Mammary epithelial cell (primary cell): ENCODE measurements at regions of chr17 and their contacts with region 1.

Region 1: GRCh38 chr17:79892459-79892858 is 53.2 kb upstream of the CBX4 start:
- DNase-seq: peak; percentile 20
- H3K4me3 ChIP-seq: no peak overlapping the region
- H3K27ac ChIP-seq: no peak overlapping the region
- H3K4me1 ChIP-seq: no peaks in the 10 kb centered on the region
- H3K27me3 ChIP-seq: no peaks in the 10 kb centered on the region
- CTCF ChIP-seq: no peak

Region 2: DNA sequence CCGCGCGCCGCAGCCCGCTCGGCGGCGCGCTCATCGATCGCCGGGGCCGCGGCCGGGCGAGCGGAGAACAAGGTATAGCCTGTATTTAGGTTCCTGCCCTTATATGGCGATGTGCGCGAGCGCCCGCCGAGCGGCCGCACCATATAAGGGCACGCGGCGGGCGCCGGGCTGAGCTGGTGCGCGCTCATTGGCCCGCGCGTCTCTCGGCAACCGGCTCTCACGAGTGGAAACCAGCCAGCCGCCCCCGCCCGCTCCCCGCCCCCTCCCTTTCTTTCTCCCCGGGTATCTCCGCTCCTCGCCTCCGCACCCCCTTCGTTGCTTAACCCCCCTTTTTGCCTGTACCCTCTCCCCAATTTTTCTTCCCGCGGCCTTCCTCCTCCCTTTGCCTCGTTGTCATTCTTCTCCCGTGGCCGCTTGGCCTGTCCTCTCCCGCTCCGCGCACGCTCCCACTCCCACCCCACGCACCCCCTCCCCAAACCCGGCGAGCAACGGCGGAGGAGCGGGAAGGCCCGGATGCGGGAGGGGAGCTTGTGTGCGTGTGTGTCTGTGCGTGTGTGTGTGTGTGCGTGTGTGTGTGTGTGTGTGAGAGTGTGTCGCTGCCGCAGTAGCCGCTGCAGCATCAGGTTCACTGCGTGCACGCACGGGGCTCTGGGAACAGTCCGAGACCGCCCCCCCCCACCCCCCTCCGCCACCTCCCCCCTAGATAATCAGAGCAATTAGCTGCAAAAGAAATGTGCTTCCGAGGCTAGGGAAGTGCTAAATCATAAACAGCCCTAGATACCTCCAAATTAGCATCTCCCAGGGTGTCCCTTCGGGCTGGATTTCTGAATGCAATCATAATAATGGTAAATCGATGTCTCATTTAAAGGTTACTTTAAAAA is 82.1 kb before region 1 on chr17:
- CTCF ChIA-PET with region 1: no interaction called
- dilution Hi-C with region 1: loop called (anchors 5 kb)
- in situ Hi-C with region 1: no loop called
- intact Hi-C with region 1: no loop called
- DNase-seq: peak; percentile 80
- H3K4me3 ChIP-seq: peak overlapping the region in 2 of 3 experiments; percentile 9 to 42
- H3K27ac ChIP-seq: no peak overlapping the region
- H3K4me1 ChIP-seq: peaks cover 40% of the 10 kb centered on the region
- H3K27me3 ChIP-seq: peaks cover 25% of the 10 kb centered on the region
- CTCF ChIP-seq: no peak

Region 3: GRCh38 chr17:79937391-79938335 is 45.2 kb after region 1 on chr17:
- CTCF ChIA-PET with region 1: no interaction called
- dilution Hi-C with region 1: loop called (anchors 5 kb)
- in situ Hi-C with region 1: no loop called
- intact Hi-C with region 1: no loop called
- DNase-seq: no peak
- H3K4me3 ChIP-seq: no peak overlapping the region
- H3K27ac ChIP-seq: no peak overlapping the region
- H3K4me1 ChIP-seq: peaks cover 3% of the 10 kb centered on the region
- H3K27me3 ChIP-seq: no peaks in the 10 kb centered on the region
- CTCF ChIP-seq: no peak

Region 4: DNA sequence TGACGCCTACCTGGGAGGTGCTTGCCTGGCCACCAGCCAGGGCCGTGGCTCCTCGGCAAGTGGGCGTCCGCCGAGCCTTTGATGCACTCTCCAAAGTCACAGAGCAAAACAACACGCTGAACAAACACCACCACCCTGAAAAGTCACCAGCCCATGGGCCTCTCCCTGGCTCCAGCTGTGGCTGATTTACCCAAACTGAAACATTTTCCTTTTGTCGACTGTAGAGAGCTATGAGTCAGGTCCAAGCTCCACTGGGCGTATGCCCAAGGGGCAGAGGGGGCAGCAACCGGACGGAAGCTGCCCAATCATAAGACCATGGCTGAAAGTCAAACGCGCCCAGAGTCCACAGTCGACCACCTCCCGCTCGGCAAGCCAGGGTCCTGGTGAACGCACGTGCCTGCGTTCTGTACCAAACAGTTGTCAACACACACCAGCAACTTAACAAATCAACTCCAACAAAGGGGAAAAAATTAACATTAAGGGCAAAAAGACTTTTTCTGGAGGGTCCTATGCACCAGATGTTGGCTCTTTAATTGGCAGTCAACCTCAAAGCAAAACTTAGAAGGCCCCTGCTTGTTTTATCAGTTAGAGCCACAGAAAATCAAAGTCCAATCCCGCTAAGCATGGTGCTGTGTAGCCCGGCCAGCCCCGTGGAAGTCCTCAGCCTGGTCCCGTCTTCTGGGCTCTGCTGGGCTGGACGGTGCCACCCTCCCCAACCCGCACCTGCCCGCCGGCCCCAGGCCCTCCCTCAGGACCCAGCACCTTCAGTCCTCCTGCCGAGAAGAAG is 95.9 kb after region 1 on chr17:
- CTCF ChIA-PET with region 1: no interaction called
- dilution Hi-C with region 1: no loop called
- in situ Hi-C with region 1: no loop called
- intact Hi-C with region 1: no loop called
- DNase-seq: peak; percentile 53
- H3K4me3 ChIP-seq: no peak overlapping the region
- H3K27ac ChIP-seq: no peak overlapping the region
- H3K4me1 ChIP-seq: peaks cover 13% of the 10 kb centered on the region
- H3K27me3 ChIP-seq: no peaks in the 10 kb centered on the region
- CTCF ChIP-seq: no peak